Left ventricle myocardium superior (tissue), 1 donor: ENCODE measurements at regions of chr22 and their contacts with region 1.

Region 1: GRCh38 chr22:39319270-39320022 is at the start of gene RPL3:
- DNase-seq: peak; percentile 98
- ATAC-seq: peak; percentile 91
- total RNA-seq, gene RPL3: 319 TPM

Region 2: DNA sequence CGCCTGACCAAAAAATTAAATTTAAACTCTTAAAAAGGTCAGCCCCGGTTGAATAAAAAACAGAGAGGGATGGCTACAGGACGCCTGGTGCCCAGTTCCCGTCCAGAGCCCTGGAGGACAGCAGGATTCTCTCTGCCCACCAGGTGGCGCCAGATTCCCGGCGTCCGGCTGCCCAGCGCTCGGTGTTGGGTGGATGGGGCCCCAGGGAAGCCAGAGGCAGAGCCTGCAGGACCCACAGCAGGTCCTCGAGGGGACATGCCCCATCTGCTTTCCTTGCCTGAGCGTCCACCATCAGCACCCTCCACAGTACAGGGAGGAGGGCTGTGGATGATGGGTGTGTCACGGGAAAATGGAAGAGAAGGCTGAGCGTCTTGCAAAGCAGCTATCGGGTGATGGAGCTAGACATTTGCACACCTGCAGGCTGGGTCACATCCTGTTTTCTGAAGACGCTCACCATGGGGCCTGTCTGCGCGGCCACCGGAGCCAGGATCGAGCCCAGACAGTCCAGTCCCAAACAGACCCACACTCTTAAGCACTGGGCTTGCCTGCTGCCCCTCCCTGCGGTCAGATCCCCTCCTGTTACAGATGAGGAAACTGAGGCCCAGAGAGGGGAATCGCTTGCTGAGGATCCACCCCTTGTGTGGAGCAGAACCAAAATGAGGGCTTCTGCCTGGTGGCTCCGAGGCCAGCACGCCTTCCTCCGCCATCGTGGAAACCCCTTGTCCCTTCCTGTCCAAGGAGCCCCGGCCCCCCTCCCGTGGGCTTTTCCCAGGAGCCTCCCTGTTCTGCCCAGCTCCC is 148.4 kb before region 1 on chr22:
- intact Hi-C with region 1: loop called (anchors 5 kb)
- DNase-seq: peak; percentile 90
- ATAC-seq: peak; percentile 84